H1 (cell line): ENCODE measurements at regions of chr2 and their contacts with region 1.

Region 1: DNA sequence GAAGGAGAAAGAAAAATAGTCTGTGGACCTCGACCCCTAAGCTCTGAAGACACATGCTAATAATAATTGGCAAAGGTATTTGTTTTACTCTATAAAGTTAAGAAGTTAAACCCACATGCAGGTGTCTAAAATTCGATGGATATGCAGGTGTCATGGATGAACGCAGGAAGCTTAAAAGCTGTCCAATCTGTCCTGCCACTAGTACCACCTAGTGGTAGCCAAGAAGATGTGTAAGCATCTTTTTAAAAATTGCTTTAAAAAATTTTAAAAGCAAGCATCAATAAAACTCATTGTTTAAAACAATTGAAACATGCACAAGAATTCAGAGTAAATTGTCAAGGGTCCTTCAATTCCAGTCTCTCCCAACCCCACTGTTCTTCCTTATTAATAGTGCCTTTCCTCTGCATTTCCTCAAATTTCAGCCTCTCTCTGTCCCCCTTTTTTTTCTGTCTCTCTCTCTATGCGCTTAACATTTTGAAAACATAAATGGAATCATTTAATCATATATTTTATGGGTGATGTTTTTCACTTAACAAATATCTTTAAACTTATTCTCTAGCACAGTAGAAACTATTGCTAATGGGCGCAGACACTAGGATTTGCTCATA is 30.6 kb upstream of the PPP3R1 start:
- DNase-seq: no peak
- H3K4me3 ChIP-seq: no peak overlapping the region
- H3K27ac ChIP-seq: no peak overlapping the region
- H3K4me1 ChIP-seq: no peaks in the 10 kb centered on the region
- H3K27me3 ChIP-seq: no peaks in the 10 kb centered on the region
- CTCF ChIP-seq: peak in 2 of 3 experiments; percentile 57 to 59; a peak in 3 of 4 replicates
- EP300 ChIP-seq: no peak
- POLR2A ChIP-seq: no peak
- RAD21 ChIP-seq: peak; percentile 66

Region 2: GRCh38 chr2:68169297-68169696 is 113.6 kb before region 1 on chr2:
- CTCF ChIA-PET with region 1: interaction called, 12 read pairs
- POLR2A ChIA-PET with region 1: no interaction called
- DNase-seq: no peak
- H3K4me3 ChIP-seq: no peak overlapping the region
- H3K27ac ChIP-seq: no peak overlapping the region
- H3K4me1 ChIP-seq: no peaks in the 10 kb centered on the region
- H3K27me3 ChIP-seq: no peaks in the 10 kb centered on the region
- CTCF ChIP-seq: peak in 1 of 3 experiments; percentile 25; a peak in 1 of 4 replicates
- EP300 ChIP-seq: no peak
- POLR2A ChIP-seq: no peak
- RAD21 ChIP-seq: no peak

Region 3: GRCh38 chr2:68272246-68272994 is 10.5 kb before region 1 on chr2:
- CTCF ChIA-PET with region 1: interaction called, 10 read pairs
- POLR2A ChIA-PET with region 1: no interaction called
- DNase-seq: no peak
- H3K4me3 ChIP-seq: no peak overlapping the region
- H3K27ac ChIP-seq: no peak overlapping the region
- H3K4me1 ChIP-seq: peaks cover 0 to 3% (median under 1%) of the 10 kb centered on the region in 4 experiments; a peak in 1 of 7 replicates
- H3K27me3 ChIP-seq: no peaks in the 10 kb centered on the region
- CTCF ChIP-seq: no peak
- EP300 ChIP-seq: no peak
- POLR2A ChIP-seq: no peak
- RAD21 ChIP-seq: no peak